Activated naive CD4-positive, alpha-beta T cell treated with anti-CD3 and anti-CD28 coated beads for 36 hours (primary cell): ENCODE measurements at regions of chr3 and their contacts with region 1.

Region 1: DNA sequence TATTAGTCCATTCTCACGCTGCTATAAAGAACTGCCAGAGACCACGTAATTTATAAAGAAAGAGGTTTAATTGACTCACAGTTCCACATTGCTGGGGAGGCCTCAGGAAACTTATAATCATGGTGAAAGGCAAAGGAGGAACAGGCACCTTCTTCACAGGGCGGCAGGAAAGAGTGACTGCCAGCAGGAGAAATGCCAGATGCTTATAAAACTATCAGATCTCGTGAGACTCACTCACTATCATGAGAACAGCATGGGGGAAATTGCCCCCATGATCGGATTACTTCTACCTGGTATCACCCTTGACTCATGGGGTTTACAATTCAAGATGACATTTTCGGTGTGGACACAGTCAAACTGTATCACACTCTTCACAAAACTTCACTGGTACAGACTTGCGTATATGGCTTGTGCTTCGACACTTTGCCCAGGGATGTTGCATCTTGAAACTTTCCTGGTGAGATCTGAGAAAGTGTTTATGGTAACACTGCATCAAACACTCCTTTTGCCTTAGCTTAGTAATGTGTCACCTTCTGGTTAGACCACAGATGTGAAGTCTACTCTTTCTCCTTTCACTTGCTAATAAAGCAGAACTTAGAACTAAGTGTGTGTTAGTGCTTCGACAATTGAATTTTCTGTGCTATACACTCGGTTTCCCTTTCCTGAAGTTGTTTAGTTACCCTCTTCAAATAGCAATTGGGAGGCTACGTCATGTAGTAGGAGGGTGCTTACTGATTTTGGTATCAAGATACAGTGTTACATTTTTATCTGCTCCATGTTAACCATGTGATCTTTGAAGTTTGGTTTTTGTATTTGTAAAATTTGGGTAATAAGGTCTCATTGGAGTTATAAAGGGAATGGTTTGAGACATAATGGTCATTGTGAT is 185.7 kb downstream of the LPP start:
- DNase-seq: peak; percentile 76
- H3K4me3 Mint-ChIP-seq: peak overlapping the region; percentile 59
- H3K27ac Mint-ChIP-seq: peak overlapping the region; percentile 92
- H3K4me1 Mint-ChIP-seq: peaks cover 34% of the 10 kb centered on the region
- H3K27me3 Mint-ChIP-seq: no peaks in the 10 kb centered on the region

Region 2: GRCh38 chr3:188257384-188258026 is 82.1 kb before region 1 on chr3:
- CTCF ChIA-PET with region 1: no interaction called
- intact Hi-C with region 1: no loop called
- DNase-seq: no peak
- H3K4me3 Mint-ChIP-seq: no peak overlapping the region
- H3K27ac Mint-ChIP-seq: no peak overlapping the region
- H3K4me1 Mint-ChIP-seq: peaks cover 44% of the 10 kb centered on the region
- H3K27me3 Mint-ChIP-seq: no peaks in the 10 kb centered on the region

Region 3: DNA sequence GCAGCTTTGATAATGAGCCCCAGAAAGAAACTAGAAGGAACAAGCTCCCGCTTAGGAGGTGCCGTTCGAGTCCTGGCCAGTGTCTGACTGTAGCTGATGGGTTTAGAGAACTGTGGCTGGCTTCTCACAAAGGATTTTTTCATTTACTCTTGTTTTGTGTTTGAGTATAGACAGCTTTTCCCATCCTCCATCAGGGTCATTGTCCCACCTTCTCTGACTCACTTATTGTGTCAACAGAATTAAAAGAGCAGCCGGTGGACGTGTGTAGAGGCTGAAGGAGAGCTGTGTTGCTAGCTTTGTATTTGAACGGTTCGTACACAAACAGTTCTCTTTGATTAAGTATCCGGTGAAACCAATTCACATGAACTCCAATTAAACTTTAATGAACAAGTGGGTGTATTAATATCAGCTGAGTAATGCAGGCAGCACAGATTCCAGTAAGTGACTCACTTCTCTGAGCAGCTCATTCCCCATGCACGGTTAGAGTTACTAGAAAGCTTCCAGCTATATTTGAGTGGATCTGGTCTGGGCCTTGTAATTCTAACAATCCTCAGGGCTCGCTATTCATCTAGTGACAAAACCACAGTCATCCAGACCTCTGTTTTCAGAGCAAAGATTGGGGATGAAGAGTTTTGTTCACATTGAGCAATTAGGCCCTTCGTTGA is 44.7 kb before region 1 on chr3:
- CTCF ChIA-PET with region 1: no interaction called
- intact Hi-C with region 1: loop called (anchors 1 kb)
- DNase-seq: peak; percentile 49
- H3K4me3 Mint-ChIP-seq: no peak overlapping the region
- H3K27ac Mint-ChIP-seq: peak overlapping the region; percentile 69
- H3K4me1 Mint-ChIP-seq: peaks cover 85% of the 10 kb centered on the region
- H3K27me3 Mint-ChIP-seq: no peaks in the 10 kb centered on the region

Region 4: GRCh38 chr3:188362405-188362831 is 22.8 kb after region 1 on chr3:
- CTCF ChIA-PET with region 1: no interaction called
- intact Hi-C with region 1: loop called (anchors 1 kb)
- DNase-seq: no peak
- H3K4me3 Mint-ChIP-seq: no peak overlapping the region
- H3K27ac Mint-ChIP-seq: no peak overlapping the region
- H3K4me1 Mint-ChIP-seq: peaks cover 40% of the 10 kb centered on the region
- H3K27me3 Mint-ChIP-seq: no peaks in the 10 kb centered on the region

Region 5: DNA sequence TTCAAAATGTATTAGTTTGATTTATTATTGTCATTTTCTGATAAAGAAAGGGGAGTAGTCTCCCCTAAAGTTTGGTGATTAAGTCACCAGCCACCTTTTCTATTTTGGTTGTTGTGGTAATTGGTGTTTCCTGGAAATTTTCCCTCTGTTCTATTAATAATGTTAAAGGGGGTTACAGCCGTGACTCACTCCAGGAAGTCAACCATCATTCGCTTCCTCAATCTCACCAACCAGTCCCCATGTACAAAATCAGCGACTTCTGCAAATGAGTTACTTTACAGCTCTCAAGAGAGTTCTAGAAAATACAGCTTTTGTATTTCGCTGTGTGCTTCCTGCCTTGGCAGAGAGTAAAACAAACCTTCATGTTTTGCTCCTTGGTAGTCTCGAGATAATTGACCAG is 99.4 kb after region 1 on chr3:
- CTCF ChIA-PET with region 1: no interaction called
- intact Hi-C with region 1: loop called (anchors 1 kb)
- DNase-seq: peak; percentile 51
- H3K4me3 Mint-ChIP-seq: no peak overlapping the region
- H3K27ac Mint-ChIP-seq: peak overlapping the region; percentile 61
- H3K4me1 Mint-ChIP-seq: peaks cover 38% of the 10 kb centered on the region
- H3K27me3 Mint-ChIP-seq: no peaks in the 10 kb centered on the region

Region 6: GRCh38 chr3:188954590-188955208 is 615.0 kb after region 1 on chr3:
- CTCF ChIA-PET with region 1: interaction called, 3 read pairs
- intact Hi-C with region 1: loop called (anchors 1 kb)
- DNase-seq: peak; percentile 91
- H3K4me3 Mint-ChIP-seq: no peak overlapping the region
- H3K27ac Mint-ChIP-seq: no peak overlapping the region
- H3K4me1 Mint-ChIP-seq: peaks cover 39% of the 10 kb centered on the region
- H3K27me3 Mint-ChIP-seq: no peaks in the 10 kb centered on the region